CD4-positive, alpha-beta memory T cell (primary cell): ENCODE measurements at regions of chr6 and their contacts with region 1.

Region 1: DNA sequence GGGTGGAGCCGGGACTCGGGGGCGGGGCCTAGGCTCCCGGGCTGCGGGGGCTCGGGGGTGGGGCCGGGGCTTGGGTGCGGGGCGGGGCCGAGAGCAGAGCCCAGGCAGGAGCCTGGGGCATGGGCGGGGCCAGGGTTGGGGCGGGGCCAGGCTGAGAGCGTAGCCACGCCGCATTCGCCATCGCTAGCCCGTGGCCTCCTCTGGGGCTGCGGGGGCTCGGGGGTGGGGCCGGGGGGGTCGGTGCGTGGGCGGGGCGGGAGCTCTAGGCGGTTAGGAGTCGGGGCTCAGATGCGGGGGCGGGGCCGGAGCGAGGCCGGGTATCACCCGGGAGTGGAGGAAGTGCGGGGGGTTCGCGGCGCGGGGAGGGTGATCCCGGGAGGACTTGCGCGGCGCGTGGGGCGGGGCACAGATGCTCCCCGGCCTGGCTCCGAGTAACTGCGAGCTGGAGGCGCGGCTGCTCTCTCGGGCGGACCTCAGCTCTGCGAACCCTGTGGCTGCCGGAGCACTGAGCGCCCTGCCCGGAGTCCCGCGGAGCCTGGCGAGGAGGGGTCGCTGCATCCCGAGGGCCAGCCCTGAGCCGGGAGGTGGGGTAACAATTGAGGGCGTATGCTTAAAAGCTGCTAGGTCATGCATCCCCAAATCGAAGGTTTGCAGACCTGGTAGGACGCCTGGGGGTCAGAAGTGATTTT is 434 bp upstream of the ECI2 start:
- DNase-seq: peak; percentile 86 to 93 (median 87)
- H3K4me3 ChIP-seq: peak overlapping the region; percentile 43 to 72
- H3K4me3 Mint-ChIP-seq: peak overlapping the region; percentile 83 to 94 (median 88)
- H3K27ac ChIP-seq: peak overlapping the region; percentile 51
- H3K27ac Mint-ChIP-seq: peak overlapping the region; percentile 71 to 93 (median 92)
- H3K4me1 ChIP-seq: peaks cover 28% of the 10 kb centered on the region
- H3K4me1 Mint-ChIP-seq: peaks cover 21 to 50% (median 36%) of the 10 kb centered on the region in 4 donors
- H3K27me3 ChIP-seq: no peaks in the 10 kb centered on the region
- H3K27me3 Mint-ChIP-seq: no peaks in the 10 kb centered on the region

Region 2: GRCh38 chr6:2765166-2765895 is 1370.5 kb before region 1 on chr6 and contains the start of gene WRNIP1:
- CTCF ChIA-PET with region 1: no interaction called
- POLR2A ChIA-PET with region 1: interaction called, 4 read pairs
- intact Hi-C with region 1: loop called (anchors 1 kb)
- DNase-seq: peak; percentile 95 to 98 (median 98)
- H3K4me3 ChIP-seq: peak within 1 kb of the TSS; percentile 63 to 79
- H3K4me3 Mint-ChIP-seq: peak within 1 kb of the TSS; percentile 93 to 97 (median 95)
- H3K27ac ChIP-seq: peak within 1 kb of the TSS; percentile 90
- H3K27ac Mint-ChIP-seq: peak within 1 kb of the TSS; percentile 98 to 100 (median 99)
- H3K4me1 ChIP-seq: peaks cover 45% of the 10 kb centered on the region
- H3K4me1 Mint-ChIP-seq: peaks cover 33 to 63% (median 43%) of the 10 kb centered on the region in 4 donors
- H3K27me3 ChIP-seq: no peaks in the 10 kb centered on the region
- H3K27me3 Mint-ChIP-seq: peaks cover 0 to 1% of the 10 kb centered on the region in 2 donors
- total RNA-seq, gene WRNIP1: 41.1 to 42.7 TPM

Region 3: GRCh38 chr6:3258720-3259490 is 876.9 kb before region 1 on chr6 and contains the start of gene PSMG4:
- CTCF ChIA-PET with region 1: no interaction called
- POLR2A ChIA-PET with region 1: no interaction called
- intact Hi-C with region 1: loop called (anchors 2 kb)
- DNase-seq: peak; percentile 87 to 92 (median 88)
- H3K4me3 ChIP-seq: peak within 1 kb of the TSS; percentile 44 to 67
- H3K4me3 Mint-ChIP-seq: peak within 1 kb of the TSS; percentile 93 to 99 (median 96)
- H3K27ac ChIP-seq: peak within 1 kb of the TSS; percentile 70
- H3K27ac Mint-ChIP-seq: peak within 1 kb of the TSS; percentile 92 to 99 (median 95)
- H3K4me1 ChIP-seq: peaks cover 45% of the 10 kb centered on the region
- H3K4me1 Mint-ChIP-seq: peaks cover 21 to 49% (median 37%) of the 10 kb centered on the region in 4 donors
- H3K27me3 ChIP-seq: no peaks in the 10 kb centered on the region
- H3K27me3 Mint-ChIP-seq: no peaks in the 10 kb centered on the region
- total RNA-seq, gene PSMG4: 41.0 to 41.6 TPM

Region 4: GRCh38 chr6:4055420-4056041 is 80.3 kb before region 1 on chr6:
- CTCF ChIA-PET with region 1: no interaction called
- POLR2A ChIA-PET with region 1: no interaction called
- intact Hi-C with region 1: loop called (anchors 5 kb)
- DNase-seq: peak in 1 of 5 donors; percentile 2
- H3K4me3 ChIP-seq: no peak overlapping the region
- H3K4me3 Mint-ChIP-seq: no peak overlapping the region
- H3K27ac ChIP-seq: no peak overlapping the region
- H3K27ac Mint-ChIP-seq: peak overlapping the region in 4 of 7 donors; percentile 34 to 70 (median 60)
- H3K4me1 ChIP-seq: no peaks in the 10 kb centered on the region
- H3K4me1 Mint-ChIP-seq: peaks cover 8 to 15% (median 11%) of the 10 kb centered on the region in 4 donors
- H3K27me3 ChIP-seq: no peaks in the 10 kb centered on the region
- H3K27me3 Mint-ChIP-seq: no peaks in the 10 kb centered on the region

Region 5: DNA sequence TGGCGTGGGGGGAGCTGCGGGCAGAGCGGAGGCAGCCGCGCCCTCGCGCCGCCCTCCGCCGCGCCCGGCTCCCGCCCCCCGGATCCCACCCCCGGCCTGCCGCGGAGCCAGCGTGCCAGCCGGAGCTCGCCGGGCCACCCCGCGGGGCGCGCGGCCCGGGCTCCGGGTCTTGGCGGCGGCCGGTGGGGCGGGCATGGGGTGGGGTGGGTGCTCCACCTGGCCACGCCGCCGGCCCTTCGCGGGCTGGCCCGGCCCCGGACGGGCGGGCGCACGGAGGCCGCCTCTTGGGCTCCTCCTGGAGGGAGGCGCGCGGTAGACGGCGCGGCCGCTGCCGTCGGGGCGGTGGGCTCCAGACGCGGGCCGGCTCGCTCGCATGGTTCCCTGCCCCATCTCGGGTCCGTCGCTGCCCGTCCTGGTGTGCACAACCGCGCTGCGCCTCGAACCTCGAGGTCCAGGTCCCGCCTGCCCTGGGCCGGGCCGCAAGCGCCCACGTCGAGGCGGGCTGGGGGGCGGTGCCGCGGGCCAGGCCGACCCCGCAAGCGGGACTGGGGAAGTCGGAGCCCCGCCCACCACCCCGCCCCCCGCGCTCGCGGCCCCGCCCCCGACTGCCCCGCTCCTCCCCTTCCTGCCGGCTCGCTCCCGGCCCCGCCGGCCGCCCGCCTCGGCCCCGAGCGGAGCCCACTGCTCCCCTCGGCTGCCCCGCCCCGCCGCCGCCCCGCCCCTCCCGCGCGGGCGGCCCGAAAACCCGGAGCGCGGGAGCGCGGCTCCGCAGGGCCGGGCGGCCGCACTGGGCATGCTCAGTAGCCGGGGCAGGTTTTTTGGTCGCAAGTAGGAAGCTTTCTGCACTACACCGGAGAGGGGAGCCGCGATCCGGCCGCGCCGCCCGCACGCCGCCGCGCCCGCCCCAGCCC is 640.0 kb after region 1 on chr6 and contains the start of gene CDYL:
- CTCF ChIA-PET with region 1: no interaction called
- POLR2A ChIA-PET with region 1: no interaction called
- intact Hi-C with region 1: loop called (anchors 5 kb)
- DNase-seq: peak; percentile 83 to 92 (median 90)
- H3K4me3 ChIP-seq: peak within 1 kb of the TSS; percentile 71 to 75
- H3K4me3 Mint-ChIP-seq: peak within 1 kb of the TSS; percentile 90 to 96 (median 92)
- H3K27ac ChIP-seq: peak within 1 kb of the TSS; percentile 52
- H3K27ac Mint-ChIP-seq: peak within 1 kb of the TSS; percentile 65 to 96 (median 91)
- H3K4me1 ChIP-seq: peaks cover 42% of the 10 kb centered on the region
- H3K4me1 Mint-ChIP-seq: peaks cover 31 to 51% (median 40%) of the 10 kb centered on the region in 4 donors
- H3K27me3 ChIP-seq: no peaks in the 10 kb centered on the region
- H3K27me3 Mint-ChIP-seq: no peaks in the 10 kb centered on the region
- total RNA-seq, gene CDYL: 31.7 to 36.7 TPM